Endothelial cell of umbilical vein (primary cell): ENCODE measurements at regions of chr1 and their contacts with region 1.

Region 1: GRCh38 chr1:169133801-169134502 is 27.5 kb downstream of the ATP1B1 start:
- DNase-seq: no peak
- H3K4me3 ChIP-seq: no peak overlapping the region
- H3K27ac ChIP-seq: no peak overlapping the region
- H3K4me1 ChIP-seq: peaks cover 8% of the 10 kb centered on the region
- H3K27me3 ChIP-seq: no peaks in the 10 kb centered on the region
- CTCF ChIP-seq: no peak
- POLR2A ChIP-seq: no peak

Region 2: DNA sequence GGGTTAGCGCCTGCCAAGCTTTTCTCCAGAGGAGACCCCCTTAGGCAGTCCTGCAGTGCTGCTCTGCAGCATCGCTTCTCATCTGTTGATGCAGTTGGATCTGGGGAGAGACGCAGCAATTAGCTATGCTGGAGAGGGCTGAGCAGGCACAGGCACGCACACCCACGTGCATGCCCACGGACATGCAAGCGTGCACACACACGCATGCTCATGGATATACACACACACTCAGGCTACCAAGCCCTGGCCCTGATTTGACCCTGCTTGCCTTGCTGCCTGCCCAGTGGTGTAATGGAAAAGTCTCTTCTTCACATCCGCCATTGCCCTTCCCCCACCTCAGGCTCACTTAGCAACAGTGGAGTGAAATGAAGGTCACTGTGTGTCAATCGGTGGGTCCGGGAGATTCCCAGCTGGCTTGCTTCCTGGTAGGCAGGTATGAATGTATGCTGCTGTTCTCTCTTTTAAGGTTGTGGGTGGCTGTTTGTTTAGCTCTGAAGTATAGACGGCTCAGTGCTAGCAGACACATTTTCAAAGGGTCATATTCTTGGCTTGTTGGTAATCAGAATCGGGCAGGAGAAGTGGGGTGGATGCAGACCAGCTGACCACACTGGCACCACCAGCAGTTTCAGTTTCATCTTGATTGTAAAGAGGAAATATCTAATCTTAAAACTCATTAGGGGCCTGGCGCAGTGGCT is 17.9 kb before region 1 on chr1:
- CTCF ChIA-PET with region 1: interaction called, 3 read pairs
- POLR2A ChIA-PET with region 1: no interaction called
- dilution Hi-C with region 1: no loop called
- intact Hi-C with region 1: loop called (anchors 1 kb)
- DNase-seq: no peak
- H3K4me3 ChIP-seq: no peak overlapping the region
- H3K27ac ChIP-seq: no peak overlapping the region
- H3K4me1 ChIP-seq: peaks cover 36% of the 10 kb centered on the region
- H3K27me3 ChIP-seq: no peaks in the 10 kb centered on the region
- CTCF ChIP-seq: no peak
- POLR2A ChIP-seq: no peak